ENCODE measurements at regions of chr9 and their contacts with region 1.

Region 1: DNA sequence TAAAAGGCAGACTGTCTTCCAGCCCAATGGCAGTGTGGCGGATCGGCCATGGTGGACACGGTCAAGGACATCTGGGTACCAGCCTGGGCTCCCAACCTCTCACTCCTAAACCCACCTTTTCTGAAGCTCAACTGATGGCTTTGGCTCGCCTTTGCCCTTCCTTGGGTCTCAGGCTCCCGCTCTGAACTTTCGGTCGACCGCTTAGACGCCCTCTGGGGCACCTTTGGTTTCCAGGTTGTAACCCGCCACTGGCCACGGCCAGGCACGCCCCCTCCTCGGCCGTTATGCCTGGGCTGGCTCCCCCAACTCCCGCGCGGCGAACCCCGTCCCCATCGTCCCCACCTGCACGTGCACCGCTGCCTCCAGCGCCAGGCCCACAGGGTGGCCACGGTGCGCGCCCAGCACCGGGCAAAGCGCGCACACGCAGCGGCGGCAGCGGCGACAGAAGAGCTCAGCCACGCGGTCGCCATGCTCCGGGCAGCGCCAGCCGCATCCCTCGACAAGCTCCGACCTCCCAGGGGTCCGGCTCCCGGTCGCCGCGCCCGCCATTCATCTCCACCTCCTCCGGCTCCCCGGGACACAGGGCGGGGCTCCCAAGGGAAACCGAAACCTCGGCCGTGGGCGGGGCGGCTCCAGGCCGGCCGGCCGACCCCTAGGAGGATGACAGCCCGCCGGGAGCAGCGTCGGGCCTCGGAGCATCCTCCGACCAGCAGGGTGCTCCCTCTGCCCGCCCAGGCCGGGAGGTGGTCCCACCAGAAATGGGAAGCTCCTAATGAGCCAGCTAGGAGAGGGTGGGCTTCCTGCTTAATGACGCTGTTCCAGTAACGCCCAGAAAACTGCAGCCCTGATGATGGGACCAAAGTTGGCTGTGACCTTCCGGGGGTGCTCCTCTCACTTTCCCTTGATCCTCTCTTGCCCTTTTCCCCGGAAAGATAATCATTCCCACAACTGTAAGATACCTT is at the start of gene TRIM14:
- DNase-seq: peak; percentile 46 to 73 (median 58)
- H3K4me3 ChIP-seq: peak within 1 kb of the TSS; percentile 95
- H3K4me3 Mint-ChIP-seq: peak within 1 kb of the TSS; percentile 86 to 95 (median 90)
- H3K27ac ChIP-seq: peak within 1 kb of the TSS; percentile 59
- H3K27ac Mint-ChIP-seq: peak within 1 kb of the TSS; percentile 85 to 99 (median 96)
- H3K4me1 ChIP-seq: peaks cover 43% of the 10 kb centered on the region
- H3K4me1 Mint-ChIP-seq: peaks cover 45 to 70% (median 61%) of the 10 kb centered on the region in 3 donors
- H3K27me3 ChIP-seq: no peaks in the 10 kb centered on the region
- H3K27me3 Mint-ChIP-seq: no peaks in the 10 kb centered on the region
- total RNA-seq, gene TRIM14: 46.2 to 52.1 TPM

Region 2: DNA sequence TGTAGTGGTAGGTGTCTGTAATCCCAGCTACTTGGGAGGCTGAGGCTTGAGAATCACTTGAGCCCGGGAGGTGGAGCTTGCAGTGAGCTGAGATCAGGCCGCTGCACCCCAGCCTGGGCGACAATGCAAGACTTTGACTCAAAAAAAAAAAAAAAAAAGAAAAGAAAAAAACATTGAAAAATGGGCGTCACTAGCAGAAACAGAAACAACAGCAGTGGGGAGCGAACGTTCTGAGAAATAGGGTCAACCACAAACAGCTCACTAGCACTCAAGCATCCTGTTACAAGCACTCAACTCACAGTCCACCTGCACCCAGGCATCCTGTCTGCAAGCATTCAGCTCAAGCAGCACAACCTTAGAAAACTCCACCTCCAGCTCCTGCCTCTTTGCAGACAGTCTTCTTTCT is 17.1 kb before region 1 on chr9:
- CTCF ChIA-PET with region 1: interaction called, 92 read pairs
- POLR2A ChIA-PET with region 1: interaction called, 49 read pairs
- DNase-seq: peak; percentile 66 to 92 (median 90)
- H3K4me3 ChIP-seq: peak overlapping the region; percentile 23
- H3K4me3 Mint-ChIP-seq: peak overlapping the region; percentile 65 to 87 (median 78)
- H3K27ac ChIP-seq: no peak overlapping the region
- H3K27ac Mint-ChIP-seq: peak overlapping the region; percentile 93 to 99 (median 96)
- H3K4me1 ChIP-seq: peaks cover 95% of the 10 kb centered on the region
- H3K4me1 Mint-ChIP-seq: peaks cover 78 to 96% (median 95%) of the 10 kb centered on the region in 3 donors
- H3K27me3 ChIP-seq: no peaks in the 10 kb centered on the region
- H3K27me3 Mint-ChIP-seq: no peaks in the 10 kb centered on the region

Region 3: GRCh38 chr9:98108531-98109031 is 10.3 kb before region 1 on chr9:
- CTCF ChIA-PET with region 1: interaction called, 92 read pairs
- POLR2A ChIA-PET with region 1: interaction called, 13 read pairs
- DNase-seq: peak in 3 of 5 donors; percentile 57 to 71 (median 68)
- H3K4me3 ChIP-seq: peak overlapping the region; percentile 20
- H3K4me3 Mint-ChIP-seq: peak overlapping the region; percentile 35 to 80 (median 75)
- H3K27ac ChIP-seq: peak overlapping the region; percentile 28
- H3K27ac Mint-ChIP-seq: peak overlapping the region; percentile 92 to 99 (median 98)
- H3K4me1 ChIP-seq: peaks cover 65% of the 10 kb centered on the region
- H3K4me1 Mint-ChIP-seq: peaks cover 74 to 89% (median 89%) of the 10 kb centered on the region in 3 donors
- H3K27me3 ChIP-seq: no peaks in the 10 kb centered on the region
- H3K27me3 Mint-ChIP-seq: no peaks in the 10 kb centered on the region

Region 4: GRCh38 chr9:98192503-98193335 is 73.8 kb after region 1 on chr9 and contains the start of gene CORO2A:
- CTCF ChIA-PET with region 1: interaction called, 17 read pairs
- POLR2A ChIA-PET with region 1: interaction called, 7 read pairs
- DNase-seq: peak; percentile 58 to 78 (median 74)
- H3K4me3 ChIP-seq: peak within 1 kb of the TSS; percentile 71
- H3K4me3 Mint-ChIP-seq: peak within 1 kb of the TSS; percentile 85 to 91 (median 89)
- H3K27ac ChIP-seq: peak within 1 kb of the TSS; percentile 51
- H3K27ac Mint-ChIP-seq: peak within 1 kb of the TSS; percentile 59 to 91 (median 80)
- H3K4me1 ChIP-seq: peaks cover 31% of the 10 kb centered on the region
- H3K4me1 Mint-ChIP-seq: peaks cover 40 to 48% (median 44%) of the 10 kb centered on the region in 3 donors
- H3K27me3 ChIP-seq: no peaks in the 10 kb centered on the region
- H3K27me3 Mint-ChIP-seq: no peaks in the 10 kb centered on the region
- total RNA-seq, gene CORO2A: 5.1 TPM